AG04450 (cell line): ENCODE measurements at regions of chr5 and their contacts with region 1.

Region 1: GRCh38 chr5:137320056-137321045 is 178.8 kb downstream of the SPOCK1 start:
- DNase-seq: peak; percentile 8
- H3K4me3 ChIP-seq: no peak overlapping the region
- H3K27ac ChIP-seq: no peak overlapping the region
- H3K27me3 ChIP-seq: peaks cover 4% of the 10 kb centered on the region
- CTCF ChIP-seq: peak; percentile 90

Region 2: GRCh38 chr5:137022725-137023124 is 297.6 kb before region 1 on chr5:
- CTCF ChIA-PET with region 1: no interaction called
- POLR2A ChIA-PET with region 1: no interaction called
- DNase-seq: no peak
- H3K4me3 ChIP-seq: no peak overlapping the region
- H3K27ac ChIP-seq: no peak overlapping the region
- H3K27me3 ChIP-seq: no peaks in the 10 kb centered on the region
- CTCF ChIP-seq: no peak

Region 3: DNA sequence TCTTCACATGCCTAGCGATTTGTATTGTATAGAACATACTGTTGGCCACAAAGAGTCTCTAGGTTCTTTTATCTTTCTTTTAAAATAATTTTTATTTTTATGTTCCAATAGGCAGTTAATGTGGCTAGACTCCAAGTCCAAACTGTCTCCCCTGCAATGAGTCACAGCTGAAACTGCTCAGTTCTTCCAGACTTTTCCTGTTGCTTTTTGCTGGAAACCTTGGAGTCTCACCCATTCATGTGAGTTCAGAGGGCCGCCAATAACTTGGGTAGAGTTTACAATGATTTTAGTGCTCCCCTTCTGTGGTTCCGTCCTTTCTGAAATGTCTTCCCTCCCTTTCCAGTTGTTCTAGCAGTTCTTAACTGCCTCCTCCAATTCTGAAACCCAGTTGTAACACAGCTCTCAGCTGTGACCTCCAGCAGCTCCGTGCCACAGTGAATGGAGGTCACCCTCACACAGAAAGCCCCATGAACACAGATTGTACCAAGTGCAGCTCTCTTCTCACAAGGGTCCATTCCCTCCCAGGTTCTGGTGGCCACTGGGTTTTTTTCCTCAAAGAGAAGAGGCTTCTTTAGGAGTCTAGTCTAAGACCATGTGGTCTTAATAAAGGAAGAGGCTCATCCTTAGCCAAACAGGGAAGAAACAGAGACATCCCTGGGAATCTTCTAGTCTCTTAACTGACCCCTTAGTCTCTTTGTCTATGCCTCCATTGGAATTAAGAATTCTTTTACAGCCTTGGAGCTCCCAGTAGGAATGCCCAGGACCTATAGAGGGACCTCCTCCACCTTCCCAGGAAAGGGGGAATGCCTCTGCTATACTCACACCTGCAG is 19.7 kb before region 1 on chr5:
- CTCF ChIA-PET with region 1: interaction called, 24 read pairs
- POLR2A ChIA-PET with region 1: no interaction called
- DNase-seq: no peak
- H3K4me3 ChIP-seq: no peak overlapping the region
- H3K27ac ChIP-seq: no peak overlapping the region
- H3K27me3 ChIP-seq: no peaks in the 10 kb centered on the region
- CTCF ChIP-seq: no peak

Region 4: GRCh38 chr5:137344723-137345322 is 24.5 kb after region 1 on chr5:
- CTCF ChIA-PET with region 1: interaction called, 20 read pairs
- POLR2A ChIA-PET with region 1: no interaction called
- DNase-seq: peak; percentile 27
- H3K4me3 ChIP-seq: no peak overlapping the region
- H3K27ac ChIP-seq: no peak overlapping the region
- H3K27me3 ChIP-seq: peaks cover 4% of the 10 kb centered on the region
- CTCF ChIP-seq: peak; percentile 95

Region 5: GRCh38 chr5:137478043-137478442 is 157.7 kb after region 1 on chr5:
- CTCF ChIA-PET with region 1: interaction called, 10 read pairs
- POLR2A ChIA-PET with region 1: no interaction called
- DNase-seq: no peak
- H3K4me3 ChIP-seq: no peak overlapping the region
- H3K27ac ChIP-seq: no peak overlapping the region
- H3K27me3 ChIP-seq: no peaks in the 10 kb centered on the region
- CTCF ChIP-seq: no peak

Region 6: GRCh38 chr5:137507150-137507549 is 186.8 kb after region 1 on chr5:
- CTCF ChIA-PET with region 1: interaction called, 20 read pairs
- POLR2A ChIA-PET with region 1: no interaction called
- DNase-seq: no peak
- H3K4me3 ChIP-seq: no peak overlapping the region
- H3K27ac ChIP-seq: no peak overlapping the region
- H3K27me3 ChIP-seq: peaks cover 5% of the 10 kb centered on the region
- CTCF ChIP-seq: no peak